Natural killer cell (primary cell): ENCODE measurements at regions of chr18 and their contacts with region 1.

Region 1: DNA sequence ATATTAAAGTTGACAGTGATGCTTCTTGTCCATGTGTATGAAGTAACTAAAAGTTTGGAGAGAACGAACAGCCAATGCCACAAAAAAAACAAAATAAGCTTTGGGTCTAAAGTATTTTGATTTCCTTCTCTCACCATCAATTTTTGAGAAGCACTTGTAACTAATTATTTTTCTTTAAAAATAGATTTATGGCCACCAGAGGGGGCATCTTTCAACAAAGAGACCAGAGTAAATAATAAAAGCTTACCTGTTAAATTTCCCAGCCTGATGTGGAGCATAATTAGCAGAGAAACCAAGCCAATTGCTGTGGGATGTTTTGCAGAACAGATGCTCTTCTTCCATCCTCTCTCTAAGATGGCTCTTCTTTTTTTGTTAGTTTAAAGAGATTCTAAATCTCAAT is 29.0 kb downstream of the LINC00305 start:
- DNase-seq: no peak
- ATAC-seq: no peak
- H3K4me3 ChIP-seq: no peak overlapping the region
- H3K4me3 Mint-ChIP-seq: no peak overlapping the region
- H3K27ac ChIP-seq: no peak overlapping the region
- H3K27ac Mint-ChIP-seq: no peak overlapping the region
- H3K4me1 ChIP-seq: no peaks in the 10 kb centered on the region
- H3K4me1 Mint-ChIP-seq: no peaks in the 10 kb centered on the region
- H3K27me3 ChIP-seq: no peaks in the 10 kb centered on the region
- H3K27me3 Mint-ChIP-seq: no peaks in the 10 kb centered on the region
- CTCF ChIP-seq: no peak

Region 2: DNA sequence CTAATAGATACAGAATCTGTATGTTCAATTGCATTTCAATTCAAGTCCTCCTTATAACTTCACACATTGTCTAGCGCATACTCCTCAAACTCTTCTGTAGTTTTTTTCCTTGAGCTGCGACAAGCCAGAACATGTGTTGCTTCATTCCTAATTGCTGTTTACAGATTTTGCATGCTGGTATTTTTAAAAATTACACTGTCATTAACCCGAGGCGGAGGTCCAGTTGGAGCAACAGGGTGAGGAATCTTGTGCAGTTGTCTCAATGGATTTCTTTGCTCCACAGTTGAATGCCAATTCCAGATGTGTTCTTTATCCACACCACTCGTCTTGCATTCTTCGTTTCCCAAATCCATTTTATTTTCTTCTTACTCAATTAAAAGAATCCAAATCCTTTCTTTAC is 549.2 kb before region 1 on chr18:
- intact Hi-C with region 1: no loop called
- DNase-seq: no peak
- ATAC-seq: no peak
- H3K4me3 ChIP-seq: no peak overlapping the region
- H3K4me3 Mint-ChIP-seq: no peak overlapping the region
- H3K27ac ChIP-seq: no peak overlapping the region
- H3K27ac Mint-ChIP-seq: no peak overlapping the region
- H3K4me1 ChIP-seq: no peaks in the 10 kb centered on the region
- H3K4me1 Mint-ChIP-seq: no peaks in the 10 kb centered on the region
- H3K27me3 ChIP-seq: no peaks in the 10 kb centered on the region
- H3K27me3 Mint-ChIP-seq: peaks cover 15 to 33% of the 10 kb centered on the region in 2 donors
- CTCF ChIP-seq: no peak

Region 3: GRCh38 chr18:64100116-64100922 is 19.6 kb before region 1 on chr18:
- intact Hi-C with region 1: loop called (anchors 2 kb)
- DNase-seq: no peak
- ATAC-seq: no peak
- H3K4me3 ChIP-seq: no peak overlapping the region
- H3K4me3 Mint-ChIP-seq: no peak overlapping the region
- H3K27ac ChIP-seq: no peak overlapping the region
- H3K27ac Mint-ChIP-seq: no peak overlapping the region
- H3K4me1 ChIP-seq: no peaks in the 10 kb centered on the region
- H3K4me1 Mint-ChIP-seq: no peaks in the 10 kb centered on the region
- H3K27me3 ChIP-seq: no peaks in the 10 kb centered on the region
- H3K27me3 Mint-ChIP-seq: peaks cover 0 to under 1% of the 10 kb centered on the region in 2 donors
- CTCF ChIP-seq: no peak

Region 4: GRCh38 chr18:64175432-64175831 is 55.5 kb after region 1 on chr18:
- intact Hi-C with region 1: no loop called
- DNase-seq: no peak
- ATAC-seq: no peak
- H3K4me3 ChIP-seq: no peak overlapping the region
- H3K4me3 Mint-ChIP-seq: no peak overlapping the region
- H3K27ac ChIP-seq: no peak overlapping the region
- H3K27ac Mint-ChIP-seq: no peak overlapping the region
- H3K4me1 ChIP-seq: no peaks in the 10 kb centered on the region
- H3K4me1 Mint-ChIP-seq: no peaks in the 10 kb centered on the region
- H3K27me3 ChIP-seq: no peaks in the 10 kb centered on the region
- H3K27me3 Mint-ChIP-seq: no peaks in the 10 kb centered on the region
- CTCF ChIP-seq: no peak

Region 5: DNA sequence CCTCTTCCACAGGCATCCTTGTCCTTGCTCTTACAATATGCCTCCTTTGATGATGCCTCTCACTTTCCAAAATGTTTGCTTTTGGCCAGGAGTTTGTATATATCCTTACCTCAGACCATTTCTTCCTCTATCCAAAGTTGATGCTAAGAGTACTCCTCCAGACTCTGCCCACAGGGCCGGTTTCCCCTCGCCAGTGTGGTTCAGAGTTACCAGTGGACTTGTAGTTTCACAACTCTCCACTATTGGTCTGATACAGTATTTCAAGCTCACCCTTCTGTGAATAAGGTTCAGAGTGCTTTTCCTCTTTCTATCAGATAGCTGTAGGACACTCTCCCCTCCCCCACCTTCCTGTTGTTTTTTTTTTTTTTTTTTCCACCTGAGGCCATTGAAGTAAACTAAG is 71.2 kb after region 1 on chr18:
- intact Hi-C with region 1: no loop called
- DNase-seq: no peak
- ATAC-seq: no peak
- H3K4me3 ChIP-seq: no peak overlapping the region
- H3K4me3 Mint-ChIP-seq: no peak overlapping the region
- H3K27ac ChIP-seq: no peak overlapping the region
- H3K27ac Mint-ChIP-seq: no peak overlapping the region
- H3K4me1 ChIP-seq: no peaks in the 10 kb centered on the region
- H3K4me1 Mint-ChIP-seq: no peaks in the 10 kb centered on the region
- H3K27me3 ChIP-seq: no peaks in the 10 kb centered on the region
- H3K27me3 Mint-ChIP-seq: no peaks in the 10 kb centered on the region
- CTCF ChIP-seq: no peak